MCF 10A (cell line): ENCODE measurements at regions of chr11 and their contacts with region 1.

Region 1: GRCh38 chr11:6377902-6378639 is 12.2 kb upstream of the SMPD1 start:
- DNase-seq: no peak
- H3K4me3 Mint-ChIP-seq: no peak overlapping the region
- H3K27ac Mint-ChIP-seq: no peak overlapping the region
- H3K4me1 Mint-ChIP-seq: no peaks in the 10 kb centered on the region
- H3K27me3 Mint-ChIP-seq: peaks cover 12% of the 10 kb centered on the region
- CTCF ChIP-seq: no peak

Region 2: GRCh38 chr11:6362873-6363678 is 15.0 kb before region 1 on chr11:
- CTCF ChIA-PET with region 1: interaction called, 140 read pairs
- POLR2A ChIA-PET with region 1: no interaction called
- intact Hi-C with region 1: no loop called
- DNase-seq: peak; percentile 81
- H3K4me3 Mint-ChIP-seq: no peak overlapping the region
- H3K27ac Mint-ChIP-seq: no peak overlapping the region
- H3K4me1 Mint-ChIP-seq: no peaks in the 10 kb centered on the region
- H3K27me3 Mint-ChIP-seq: no peaks in the 10 kb centered on the region
- CTCF ChIP-seq: peak; percentile 82

Region 3: DNA sequence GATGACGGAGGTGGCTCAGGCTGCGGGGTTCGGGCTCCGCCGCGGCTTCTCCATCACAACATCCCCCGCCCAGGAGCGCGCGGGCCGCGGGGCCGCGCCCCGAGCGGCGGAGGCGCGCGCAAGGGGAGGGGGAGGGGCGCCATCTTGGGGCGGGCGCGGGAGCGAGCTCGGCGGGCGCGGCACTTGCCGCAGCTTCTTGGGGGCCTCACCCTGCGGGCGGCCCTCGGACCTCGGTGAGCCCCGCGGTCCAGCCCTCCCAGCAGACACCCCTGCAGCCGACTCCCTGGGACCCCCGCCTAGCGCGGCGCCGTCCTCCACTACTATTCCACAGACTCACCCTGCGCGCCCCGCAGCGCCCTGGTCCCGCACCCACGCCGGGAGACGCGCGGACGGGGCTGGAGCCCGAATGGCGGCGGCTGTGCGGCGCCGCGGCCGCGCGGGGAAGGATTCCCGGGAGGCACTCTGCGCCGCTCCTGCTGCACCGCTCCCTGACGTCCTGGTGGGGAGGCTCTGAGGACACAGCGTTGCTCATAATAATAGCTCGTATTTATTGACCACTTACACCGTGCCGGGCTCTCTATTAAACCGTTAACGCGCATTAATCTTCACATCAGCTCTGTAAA is 41.0 kb after region 1 on chr11 and contains the start of gene APBB1:
- CTCF ChIA-PET with region 1: interaction called, 15 read pairs
- POLR2A ChIA-PET with region 1: no interaction called
- intact Hi-C with region 1: no loop called
- DNase-seq: no peak
- H3K4me3 Mint-ChIP-seq: peak within 1 kb of the TSS; percentile 45
- H3K27ac Mint-ChIP-seq: no peak within 1 kb of the TSS
- H3K4me1 Mint-ChIP-seq: no peaks in the 10 kb centered on the region
- H3K27me3 Mint-ChIP-seq: peaks cover 37% of the 10 kb centered on the region
- CTCF ChIP-seq: no peak
- total RNA-seq, gene APBB1: 0.89 and 1.3 TPM in 2 replicates

Region 4: DNA sequence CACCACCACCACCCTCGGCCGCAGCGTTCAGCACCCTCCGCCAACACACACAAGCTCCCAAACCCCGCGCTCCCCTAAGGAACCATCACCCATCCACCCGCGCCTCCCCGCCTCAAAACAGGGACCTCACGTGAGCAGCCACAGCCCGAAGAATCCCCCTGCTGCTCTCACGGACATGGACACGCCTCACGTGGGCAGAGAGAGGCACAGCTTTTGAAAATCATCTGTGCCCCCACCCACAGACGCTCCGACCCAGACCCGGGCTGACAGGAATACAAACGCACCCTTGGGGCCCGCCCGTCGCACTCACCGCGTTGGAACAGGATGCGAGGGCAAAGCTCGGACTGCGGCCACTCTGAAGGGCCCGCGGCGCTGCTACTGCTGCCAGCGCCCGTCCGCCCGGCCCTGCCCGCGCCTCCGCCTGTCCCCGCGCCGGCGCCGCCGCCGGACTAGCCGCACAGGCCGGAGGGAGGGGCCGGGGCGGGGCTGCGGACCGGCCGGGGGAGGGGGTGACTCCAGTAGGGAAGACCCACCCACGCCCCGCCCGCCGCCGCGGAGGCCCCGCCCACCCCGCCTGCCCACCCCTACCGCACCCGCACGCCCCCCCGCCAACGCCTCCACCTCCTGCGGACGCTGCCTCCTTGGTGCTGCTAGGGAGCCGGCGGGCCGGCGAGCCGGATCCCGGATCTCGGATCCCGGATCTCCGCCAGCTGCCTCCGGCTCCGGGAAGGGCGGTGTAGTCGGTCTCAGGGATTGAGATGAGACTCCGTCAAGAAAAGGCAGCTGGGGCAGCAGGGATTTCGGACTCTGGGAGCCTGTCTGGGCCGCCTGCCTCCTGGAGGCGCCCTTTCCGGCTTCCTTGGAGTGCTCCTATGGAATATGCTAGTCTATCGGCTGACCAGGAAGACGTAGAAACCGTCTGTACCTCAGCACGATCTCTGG is 95.7 kb after region 1 on chr11 and contains the start of gene TRIM3:
- CTCF ChIA-PET with region 1: interaction called, 22 read pairs
- POLR2A ChIA-PET with region 1: interaction called, 8 read pairs
- intact Hi-C with region 1: no loop called
- DNase-seq: peak; percentile 83
- H3K4me3 Mint-ChIP-seq: peak within 1 kb of the TSS; percentile 83
- H3K27ac Mint-ChIP-seq: peak within 1 kb of the TSS; percentile 87
- H3K4me1 Mint-ChIP-seq: peaks cover 11% of the 10 kb centered on the region
- H3K27me3 Mint-ChIP-seq: no peaks in the 10 kb centered on the region
- CTCF ChIP-seq: no peak
- total RNA-seq, gene TRIM3: 7.3 and 7.4 TPM in 2 replicates

Region 5: DNA sequence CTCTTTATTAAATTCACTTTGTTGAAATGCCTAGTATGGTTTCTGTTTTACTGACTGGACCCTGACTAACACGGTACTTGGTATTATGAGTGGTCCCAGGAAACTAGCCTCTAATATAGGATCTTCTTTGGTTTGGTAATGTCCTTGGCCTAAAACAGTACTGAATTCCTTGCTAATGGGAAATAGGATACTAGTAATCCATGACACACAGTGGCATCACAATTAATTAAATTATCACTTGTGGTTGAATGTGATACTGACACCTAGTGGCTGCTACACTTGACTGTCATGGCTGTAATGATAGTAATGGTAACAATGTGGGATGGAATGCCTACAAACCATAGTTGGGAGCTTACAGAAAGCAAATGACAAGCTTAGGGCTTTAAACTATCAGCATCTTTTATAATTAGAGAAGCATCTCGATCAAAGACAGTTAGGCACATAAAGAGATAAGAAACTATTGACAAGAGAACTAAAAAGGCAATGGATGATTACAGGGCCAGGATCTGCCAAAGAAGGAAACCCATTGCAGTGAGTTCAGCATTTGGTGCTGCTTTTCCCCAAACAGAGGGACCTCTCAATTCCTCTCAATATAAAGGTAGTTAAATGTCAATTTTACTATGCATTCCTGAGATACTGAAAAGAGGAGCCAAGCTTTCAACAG is 127.6 kb after region 1 on chr11:
- CTCF ChIA-PET with region 1: interaction called, 244 read pairs
- POLR2A ChIA-PET with region 1: interaction called, 12 read pairs
- intact Hi-C with region 1: loop called (anchors 1 kb)
- DNase-seq: peak; percentile 64
- H3K4me3 Mint-ChIP-seq: no peak overlapping the region
- H3K27ac Mint-ChIP-seq: no peak overlapping the region
- H3K4me1 Mint-ChIP-seq: no peaks in the 10 kb centered on the region
- H3K27me3 Mint-ChIP-seq: no peaks in the 10 kb centered on the region
- CTCF ChIP-seq: peak; percentile 52

Region 6: DNA sequence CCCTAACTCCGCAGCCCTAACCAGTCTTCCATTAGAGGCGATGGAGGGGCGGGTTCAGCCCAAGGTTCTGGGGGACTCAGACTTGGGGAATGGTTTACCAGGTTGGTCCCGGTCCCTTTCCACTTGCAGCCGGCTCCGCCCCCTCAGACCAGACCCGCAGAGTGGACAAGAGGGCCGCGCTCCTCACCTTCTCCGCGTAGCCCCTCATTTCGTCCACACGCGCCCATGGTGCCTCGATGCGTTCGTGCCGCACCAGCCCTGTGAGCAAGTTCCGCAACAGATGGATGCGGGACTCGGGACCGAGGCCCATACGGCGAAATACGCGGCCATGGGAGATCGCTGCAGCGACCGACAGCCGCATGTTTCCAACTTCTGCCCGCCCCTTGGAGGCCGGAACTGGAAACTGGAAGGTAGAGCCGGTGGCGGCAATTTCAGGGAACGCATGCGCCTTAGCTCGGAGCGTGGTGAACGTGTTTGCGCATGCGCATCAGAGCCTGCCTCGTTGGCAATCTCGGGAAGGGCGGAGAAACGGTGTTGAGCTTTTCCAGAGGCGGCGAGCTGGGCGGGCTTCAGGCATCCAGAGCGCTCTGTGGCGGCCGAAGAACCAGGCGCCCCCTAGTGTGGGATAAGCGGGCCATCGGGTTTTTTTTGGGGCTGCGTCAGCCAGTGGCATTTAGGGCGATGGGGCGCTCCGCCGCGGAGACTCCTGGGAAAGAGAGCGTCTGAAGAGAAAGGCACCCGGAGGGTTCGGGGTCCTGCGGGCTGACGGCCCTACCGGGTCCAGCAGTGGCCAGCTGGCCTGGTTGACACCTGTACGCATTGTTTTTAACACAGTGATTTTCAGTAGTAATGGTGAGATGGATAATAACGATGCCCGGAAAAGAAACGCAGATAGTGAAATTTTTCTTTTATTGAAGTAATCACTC is 305.1 kb after region 1 on chr11 and contains the start of gene MRPL17:
- CTCF ChIA-PET with region 1: interaction called, 22 read pairs
- POLR2A ChIA-PET with region 1: no interaction called
- intact Hi-C with region 1: loop called (anchors 1 kb)
- DNase-seq: peak; percentile 99
- H3K4me3 Mint-ChIP-seq: peak within 1 kb of the TSS; percentile 100
- H3K27ac Mint-ChIP-seq: peak within 1 kb of the TSS; percentile 95
- H3K4me1 Mint-ChIP-seq: peaks cover 12% of the 10 kb centered on the region
- H3K27me3 Mint-ChIP-seq: no peaks in the 10 kb centered on the region
- CTCF ChIP-seq: peak; percentile 75
- total RNA-seq, gene MRPL17: 78.0 and 88.4 TPM in 2 replicates